Mammary epithelial cell (primary cell): ENCODE measurements at regions of chr13 and their contacts with region 1.

Region 1: DNA sequence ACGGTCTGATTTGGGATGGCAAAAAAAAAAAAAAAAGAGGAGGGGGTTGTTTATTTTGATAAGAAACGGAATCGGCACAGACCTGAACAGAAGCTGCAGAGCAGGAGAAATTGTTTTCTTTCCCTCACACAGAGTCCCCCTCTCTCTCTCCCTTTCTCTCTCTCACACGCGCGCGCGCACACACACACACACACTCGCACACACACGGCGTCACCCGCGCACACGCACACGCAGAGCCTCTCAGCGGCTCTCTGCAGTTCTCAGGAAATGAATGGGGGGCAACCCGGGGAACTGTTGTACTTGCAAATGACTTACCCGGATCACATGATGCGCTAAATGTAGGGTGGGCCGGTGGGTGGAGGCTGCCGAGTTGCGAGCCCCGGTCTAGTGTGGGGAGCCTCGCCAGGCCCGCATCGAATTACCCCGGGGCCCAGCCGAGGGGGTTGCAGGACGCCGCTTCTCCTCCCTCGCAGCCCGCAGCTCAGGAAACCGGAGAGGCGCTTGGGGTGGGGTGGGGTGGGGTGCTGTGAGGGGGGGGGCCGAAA is 475 bp downstream of the KLF12 start:
- DNase-seq: peak; percentile 72
- H3K4me3 ChIP-seq: peak overlapping the region; percentile 66 to 92 (median 67)
- H3K27ac ChIP-seq: peak overlapping the region; percentile 77
- H3K4me1 ChIP-seq: peaks cover 8% of the 10 kb centered on the region
- H3K27me3 ChIP-seq: no peaks in the 10 kb centered on the region
- CTCF ChIP-seq: no peak

Region 2: GRCh38 chr13:72638059-72638815 is 1495.5 kb before region 1 on chr13:
- CTCF ChIA-PET with region 1: interaction called, 12 read pairs
- dilution Hi-C with region 1: no loop called
- in situ Hi-C with region 1: no loop called
- intact Hi-C with region 1: no loop called
- DNase-seq: peak; percentile 92
- H3K4me3 ChIP-seq: peak overlapping the region in 1 of 3 experiments; percentile 14
- H3K27ac ChIP-seq: peak overlapping the region; percentile 98
- H3K4me1 ChIP-seq: peaks cover 23% of the 10 kb centered on the region
- H3K27me3 ChIP-seq: no peaks in the 10 kb centered on the region
- CTCF ChIP-seq: no peak

Region 3: GRCh38 chr13:73754727-73755292 is 378.9 kb before region 1 on chr13:
- CTCF ChIA-PET with region 1: no interaction called
- dilution Hi-C with region 1: no loop called
- in situ Hi-C with region 1: no loop called
- intact Hi-C with region 1: loop called (anchors 5 kb)
- DNase-seq: peak; percentile 50
- H3K4me3 ChIP-seq: no peak overlapping the region
- H3K27ac ChIP-seq: no peak overlapping the region
- H3K4me1 ChIP-seq: no peaks in the 10 kb centered on the region
- H3K27me3 ChIP-seq: no peaks in the 10 kb centered on the region
- CTCF ChIP-seq: peak; percentile 57 to 72

Region 4: DNA sequence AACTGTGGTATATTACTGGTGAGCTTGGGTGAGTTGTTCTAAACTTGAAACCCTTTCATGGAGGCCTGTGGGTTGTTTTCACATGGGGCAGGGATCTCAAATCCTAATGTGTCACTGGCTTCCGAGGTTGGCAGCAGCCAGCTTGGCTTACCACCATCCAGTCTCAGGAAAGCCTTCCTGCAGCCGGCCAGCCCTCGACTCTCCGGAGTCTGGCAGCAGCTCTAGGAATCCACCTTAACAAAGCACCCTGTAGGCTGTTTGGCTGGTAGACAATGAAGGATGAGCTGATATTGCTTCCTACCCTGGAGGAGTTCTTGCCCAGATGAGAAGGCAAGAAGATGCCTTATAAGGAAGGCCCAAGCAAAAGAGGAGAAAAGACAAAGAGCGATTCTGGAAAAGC is 187.9 kb before region 1 on chr13:
- CTCF ChIA-PET with region 1: no interaction called
- dilution Hi-C with region 1: no loop called
- in situ Hi-C with region 1: no loop called
- intact Hi-C with region 1: loop called (anchors 2 kb)
- DNase-seq: peak; percentile 12
- H3K4me3 ChIP-seq: no peak overlapping the region
- H3K27ac ChIP-seq: no peak overlapping the region
- H3K4me1 ChIP-seq: no peaks in the 10 kb centered on the region
- H3K27me3 ChIP-seq: no peaks in the 10 kb centered on the region
- CTCF ChIP-seq: no peak

Region 5: DNA sequence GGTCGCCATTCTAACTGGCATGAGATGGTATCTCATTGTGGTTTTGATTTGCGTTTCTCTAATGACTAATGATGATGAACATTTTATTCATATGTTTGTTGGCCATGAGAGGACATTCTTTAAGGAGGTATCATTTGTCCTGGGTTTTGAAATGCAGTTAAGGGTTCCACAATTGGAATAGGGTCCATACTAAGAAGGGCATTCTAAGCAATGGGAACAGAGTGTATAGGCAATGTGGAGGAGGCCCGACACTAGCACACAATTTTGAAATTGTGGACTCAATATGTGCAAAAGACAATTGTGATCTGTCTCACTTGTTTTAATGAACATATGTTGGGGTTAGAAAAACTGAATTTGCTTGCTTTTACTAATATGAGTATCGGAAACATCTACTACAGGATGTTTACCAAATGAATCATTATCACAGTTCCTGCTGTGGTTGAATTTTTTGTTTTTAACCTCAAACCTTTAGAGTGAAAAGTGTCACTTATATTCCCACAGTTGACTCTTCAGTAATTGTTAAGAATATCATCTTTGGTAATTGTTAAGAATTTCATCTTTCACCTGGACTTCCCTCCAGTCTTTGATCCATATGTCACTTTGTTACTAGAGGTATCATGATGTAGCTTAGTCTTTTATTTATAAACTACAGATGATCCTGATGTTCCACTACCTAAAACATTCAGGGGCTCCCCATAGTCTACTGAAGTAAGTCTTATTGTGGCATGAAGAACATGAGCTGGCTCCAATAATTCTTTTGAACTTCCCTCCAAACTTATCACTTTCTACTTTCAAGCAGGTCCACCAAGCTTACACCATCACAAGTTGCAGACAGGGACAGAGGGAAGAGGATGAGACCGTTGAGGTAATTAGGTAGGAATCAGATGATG is 110.2 kb after region 1 on chr13:
- CTCF ChIA-PET with region 1: no interaction called
- dilution Hi-C with region 1: no loop called
- in situ Hi-C with region 1: no loop called
- intact Hi-C with region 1: loop called (anchors 5 kb)
- DNase-seq: peak; percentile 87
- H3K4me3 ChIP-seq: peak overlapping the region in 1 of 3 experiments; percentile 21
- H3K27ac ChIP-seq: peak overlapping the region; percentile 78
- H3K4me1 ChIP-seq: peaks cover 17% of the 10 kb centered on the region
- H3K27me3 ChIP-seq: no peaks in the 10 kb centered on the region
- CTCF ChIP-seq: no peak

Region 6: DNA sequence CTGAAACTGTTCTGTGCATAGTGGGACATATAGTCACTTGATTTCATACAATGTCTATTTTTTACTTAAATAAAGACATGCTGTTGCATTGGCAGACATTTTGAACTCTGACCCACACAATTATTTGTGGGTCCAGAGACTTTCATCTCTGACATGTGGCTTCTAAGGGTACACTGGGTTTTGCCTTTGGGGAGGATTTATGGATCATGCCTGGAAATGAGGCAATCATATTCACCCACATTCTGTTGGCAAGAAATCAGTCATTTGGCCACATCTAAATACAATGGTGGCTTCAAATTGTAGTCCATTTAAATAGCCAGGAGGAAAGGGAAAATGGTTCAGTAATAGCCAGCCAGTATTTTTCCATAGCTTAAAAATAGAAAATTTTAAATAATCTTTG is 238.8 kb after region 1 on chr13:
- CTCF ChIA-PET with region 1: no interaction called
- dilution Hi-C with region 1: no loop called
- in situ Hi-C with region 1: no loop called
- intact Hi-C with region 1: no loop called
- DNase-seq: no peak
- H3K4me3 ChIP-seq: no peak overlapping the region
- H3K27ac ChIP-seq: no peak overlapping the region
- H3K4me1 ChIP-seq: no peaks in the 10 kb centered on the region
- H3K27me3 ChIP-seq: no peaks in the 10 kb centered on the region
- CTCF ChIP-seq: no peak

Region 7: GRCh38 chr13:74443631-74444030 is 309.9 kb after region 1 on chr13:
- CTCF ChIA-PET with region 1: no interaction called
- dilution Hi-C with region 1: no loop called
- in situ Hi-C with region 1: no loop called
- intact Hi-C with region 1: loop called (anchors 5 kb)
- DNase-seq: peak; percentile 79
- H3K4me3 ChIP-seq: peak overlapping the region in 2 of 3 experiments; percentile 28
- H3K27ac ChIP-seq: peak overlapping the region; percentile 85
- H3K4me1 ChIP-seq: peaks cover 34% of the 10 kb centered on the region
- H3K27me3 ChIP-seq: no peaks in the 10 kb centered on the region
- CTCF ChIP-seq: no peak